ENCODE measurements at regions of chr12 and their contacts with region 1.

Region 1: DNA sequence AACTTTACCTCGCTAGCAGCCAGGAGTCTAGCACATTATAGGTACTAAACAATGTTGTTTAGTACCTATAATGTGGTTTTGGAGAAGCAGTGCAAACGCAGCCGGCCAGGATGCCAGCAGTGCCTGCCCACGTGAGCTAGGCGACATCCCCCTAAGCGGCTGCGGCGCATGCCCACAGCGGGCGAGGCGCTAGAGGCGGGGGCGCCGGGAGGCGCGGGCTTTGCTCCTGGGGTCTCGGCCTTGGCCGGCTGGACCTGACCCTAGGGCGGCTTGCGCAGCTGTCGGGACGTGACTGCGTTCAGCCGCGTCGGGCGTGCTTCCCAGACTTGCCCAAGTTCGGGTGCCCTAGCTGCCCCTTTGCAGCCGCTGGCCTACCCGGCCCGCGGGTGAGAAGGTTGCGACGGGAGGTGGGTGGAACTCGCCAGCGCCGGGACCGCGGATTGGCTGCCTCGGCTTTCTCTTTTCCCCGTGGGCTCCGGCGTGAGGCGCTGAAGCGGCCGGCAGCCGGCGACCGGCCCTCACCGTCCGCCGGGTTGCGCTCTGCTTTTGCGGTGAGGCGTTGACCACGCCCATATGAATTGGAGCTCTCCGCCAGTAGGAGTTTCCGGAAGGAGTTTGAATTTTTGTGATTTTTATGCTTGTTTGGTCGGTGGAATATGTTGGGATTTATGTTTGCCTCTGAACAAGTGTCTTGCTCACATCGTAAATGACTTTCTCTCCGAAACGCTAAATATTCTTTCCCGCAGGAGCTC is at the start of gene TMEM19:
- DNase-seq: peak; percentile 88
- H3K4me3 Mint-ChIP-seq: peak within 1 kb of the TSS; percentile 82
- H3K27ac Mint-ChIP-seq: peak within 1 kb of the TSS; percentile 91
- H3K4me1 Mint-ChIP-seq: peaks cover 46% of the 10 kb centered on the region
- H3K27me3 Mint-ChIP-seq: no peaks in the 10 kb centered on the region

Region 2: GRCh38 chr12:71663561-71664294 is 22.4 kb before region 1 on chr12 and contains the start of gene ZFC3H1:
- CTCF ChIA-PET with region 1: interaction called, 27 read pairs
- DNase-seq: peak; percentile 95
- H3K4me3 Mint-ChIP-seq: peak within 1 kb of the TSS; percentile 98
- H3K27ac Mint-ChIP-seq: peak within 1 kb of the TSS; percentile 100
- H3K4me1 Mint-ChIP-seq: peaks cover 53% of the 10 kb centered on the region
- H3K27me3 Mint-ChIP-seq: peaks cover 4% of the 10 kb centered on the region

Region 3: GRCh38 chr12:71754461-71755145 is 68.5 kb after region 1 on chr12 and contains the start of gene RAB21:
- CTCF ChIA-PET with region 1: interaction called, 10 read pairs
- DNase-seq: peak; percentile 99
- H3K4me3 Mint-ChIP-seq: peak within 1 kb of the TSS; percentile 93
- H3K27ac Mint-ChIP-seq: peak within 1 kb of the TSS; percentile 98
- H3K4me1 Mint-ChIP-seq: peaks cover 31% of the 10 kb centered on the region
- H3K27me3 Mint-ChIP-seq: peaks cover 30% of the 10 kb centered on the region

Region 4: DNA sequence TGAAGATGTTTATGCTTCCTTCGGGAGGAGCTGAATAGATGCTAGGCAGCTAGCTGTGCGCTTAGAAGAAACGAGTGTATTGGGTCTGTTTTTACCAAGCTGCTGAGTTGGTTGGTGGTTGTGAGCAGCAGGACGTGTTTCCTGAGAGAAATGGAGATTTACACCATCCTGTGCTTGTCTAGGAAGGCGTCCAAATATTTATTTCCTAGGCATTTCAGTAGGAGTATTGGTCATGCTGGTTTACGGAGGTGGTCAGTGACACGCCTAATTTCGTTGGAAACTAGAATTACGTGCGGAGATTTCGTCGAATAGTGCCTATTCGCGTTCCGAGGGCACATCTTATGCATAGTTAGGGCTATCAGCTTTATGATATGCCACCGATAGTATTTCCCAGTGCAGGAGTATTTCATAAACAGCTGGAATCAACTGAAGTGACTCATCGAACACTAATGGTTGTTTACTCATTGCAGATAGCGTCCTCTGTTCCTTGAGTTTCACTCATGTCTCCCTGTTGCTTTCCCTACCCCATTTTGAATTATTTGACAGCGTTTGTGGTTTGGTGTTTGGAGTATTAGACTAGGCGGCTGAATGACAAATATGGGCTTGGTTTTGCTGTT is 154.2 kb after region 1 on chr12:
- CTCF ChIA-PET with region 1: no interaction called
- DNase-seq: peak; percentile 28
- H3K4me3 Mint-ChIP-seq: peak overlapping the region; percentile 87
- H3K27ac Mint-ChIP-seq: peak overlapping the region; percentile 98
- H3K4me1 Mint-ChIP-seq: peaks cover 40% of the 10 kb centered on the region
- H3K27me3 Mint-ChIP-seq: no peaks in the 10 kb centered on the region

Region 5: GRCh38 chr12:71900091-71900490 is 214.0 kb after region 1 on chr12:
- CTCF ChIA-PET with region 1: no interaction called
- DNase-seq: no peak
- H3K4me3 Mint-ChIP-seq: no peak overlapping the region
- H3K27ac Mint-ChIP-seq: no peak overlapping the region
- H3K4me1 Mint-ChIP-seq: peaks cover 18% of the 10 kb centered on the region
- H3K27me3 Mint-ChIP-seq: no peaks in the 10 kb centered on the region

Region 6: GRCh38 chr12:71958993-71959578 is 273.0 kb after region 1 on chr12:
- CTCF ChIA-PET with region 1: no interaction called
- DNase-seq: no peak
- H3K4me3 Mint-ChIP-seq: no peak overlapping the region
- H3K27ac Mint-ChIP-seq: no peak overlapping the region
- H3K4me1 Mint-ChIP-seq: no peaks in the 10 kb centered on the region
- H3K27me3 Mint-ChIP-seq: peaks cover 4% of the 10 kb centered on the region